Endothelial cell of umbilical vein (primary cell): ENCODE measurements at regions of chr9 and their contacts with region 1.

Region 1: GRCh38 chr9:83219152-83219923 is 156.4 kb upstream of the RASEF start:
- DNase-seq: peak; percentile 84
- H3K4me3 ChIP-seq: peak overlapping the region; percentile 45 to 100 (median 98)
- H3K27ac ChIP-seq: peak overlapping the region; percentile 66
- H3K4me1 ChIP-seq: peaks cover 23% of the 10 kb centered on the region
- H3K27me3 ChIP-seq: no peaks in the 10 kb centered on the region
- CTCF ChIP-seq: peak; percentile 43 to 63
- POLR2A ChIP-seq: peak; percentile 41

Region 2: DNA sequence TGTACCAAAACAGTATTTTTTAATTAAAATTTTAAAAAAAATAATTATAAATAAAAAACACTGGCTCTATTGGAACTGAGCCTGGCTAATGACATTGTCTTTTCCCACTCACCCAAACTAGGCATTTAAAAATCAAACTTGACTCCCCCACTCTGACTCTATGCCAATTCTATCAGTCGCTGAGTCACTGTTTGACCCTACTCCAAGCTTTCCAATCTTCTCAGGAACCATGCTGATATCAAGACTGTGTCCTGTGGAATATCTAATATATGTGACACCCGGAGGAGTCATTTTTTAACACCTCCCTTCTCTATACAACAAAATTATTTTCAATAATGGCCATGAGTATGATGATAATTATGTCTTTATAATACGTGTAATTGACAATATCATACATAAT is 15.2 kb after region 1 on chr9:
- CTCF ChIA-PET with region 1: interaction called, 15 read pairs
- POLR2A ChIA-PET with region 1: no interaction called
- dilution Hi-C with region 1: no loop called
- intact Hi-C with region 1: no loop called
- DNase-seq: peak; percentile 61
- H3K4me3 ChIP-seq: no peak overlapping the region
- H3K27ac ChIP-seq: no peak overlapping the region
- H3K4me1 ChIP-seq: peaks cover 10% of the 10 kb centered on the region
- H3K27me3 ChIP-seq: no peaks in the 10 kb centered on the region
- CTCF ChIP-seq: no peak
- POLR2A ChIP-seq: no peak

Region 3: DNA sequence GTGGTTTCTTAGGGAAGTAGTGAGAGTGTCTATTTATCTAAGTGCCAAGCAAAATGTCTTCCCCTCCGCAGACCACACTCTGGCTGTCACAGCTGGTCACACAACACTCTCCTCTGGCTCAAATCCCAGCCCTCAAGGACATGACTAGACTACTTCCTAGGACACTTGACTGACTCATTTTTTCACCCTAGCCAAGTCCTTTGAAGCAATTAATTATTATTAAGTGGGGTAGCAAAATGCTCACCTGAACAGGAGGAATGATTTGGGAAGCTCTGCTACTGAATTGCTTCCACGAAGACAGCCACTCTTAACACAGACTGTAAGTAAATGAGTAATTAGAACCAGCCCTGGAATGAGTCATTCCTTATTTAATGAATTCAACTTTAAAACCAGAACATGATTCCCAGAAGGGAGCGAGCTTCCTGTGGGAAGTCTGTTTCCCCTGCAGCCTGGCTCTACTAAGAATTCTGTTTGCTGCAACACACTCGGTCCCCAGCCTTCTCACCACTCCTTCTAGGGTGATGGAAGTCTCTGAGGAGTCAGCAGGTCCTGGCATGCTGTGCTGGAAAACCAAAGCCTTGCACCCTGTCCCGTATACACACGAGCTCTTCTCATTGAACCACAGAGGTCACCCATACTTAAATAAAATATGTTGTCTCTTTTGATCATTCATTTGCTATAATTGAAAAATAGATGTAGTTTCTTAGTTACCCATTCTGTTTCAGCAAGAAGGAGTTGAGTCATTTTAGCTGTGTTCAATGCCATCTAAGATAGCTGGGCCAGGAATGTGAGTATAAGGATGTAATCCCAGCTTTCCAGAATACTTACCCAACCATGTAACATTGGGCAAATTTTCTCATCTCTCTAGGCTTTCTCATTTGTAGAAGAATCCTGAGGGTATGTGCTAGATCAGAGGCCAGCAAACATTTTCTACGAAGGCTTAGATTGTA is 62.2 kb after region 1 on chr9:
- CTCF ChIA-PET with region 1: interaction called, 27 read pairs
- POLR2A ChIA-PET with region 1: no interaction called
- dilution Hi-C with region 1: no loop called
- intact Hi-C with region 1: loop called (anchors 2 kb)
- DNase-seq: peak; percentile 82
- H3K4me3 ChIP-seq: peak overlapping the region in 1 of 3 experiments; percentile 14
- H3K27ac ChIP-seq: peak overlapping the region; percentile 77
- H3K4me1 ChIP-seq: peaks cover 25% of the 10 kb centered on the region
- H3K27me3 ChIP-seq: no peaks in the 10 kb centered on the region
- CTCF ChIP-seq: no peak
- POLR2A ChIP-seq: no peak

Region 4: DNA sequence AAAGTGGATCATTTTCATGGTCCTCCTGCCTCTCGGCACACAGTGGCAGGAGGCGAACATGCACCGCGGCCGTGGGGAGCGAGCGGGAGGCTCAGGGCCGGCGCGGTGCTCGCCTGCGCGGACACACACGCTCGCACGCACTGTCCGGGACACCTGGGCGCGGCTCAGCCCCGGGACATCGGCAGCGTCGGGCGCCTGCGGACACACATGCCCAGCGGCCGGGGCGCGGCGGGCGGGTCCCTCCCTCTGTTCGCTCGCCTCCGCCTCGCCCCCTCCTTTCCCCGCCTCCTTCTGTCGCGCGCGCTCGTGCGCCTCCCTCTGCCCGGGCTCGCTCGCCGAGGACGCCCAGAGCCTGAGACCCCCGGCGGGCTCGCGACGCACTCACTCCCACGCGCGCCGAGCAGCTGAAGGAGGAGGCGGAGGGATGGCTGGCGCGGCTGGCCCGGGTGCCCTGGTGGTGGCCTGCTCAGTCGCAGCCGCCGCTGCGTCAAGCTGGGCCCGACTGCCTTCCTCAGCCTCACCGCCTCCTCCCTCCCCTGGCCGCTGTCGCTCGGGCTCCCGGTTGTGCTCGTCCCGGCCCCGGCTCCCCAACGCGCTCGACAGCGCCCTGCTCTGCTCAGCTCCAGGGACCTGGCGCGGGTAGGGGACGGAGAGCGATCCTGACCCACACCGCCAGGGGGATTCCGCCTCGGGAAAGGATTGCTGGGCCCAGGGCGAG is 319.0 kb after region 1 on chr9 and contains the start of gene FRMD3:
- CTCF ChIA-PET with region 1: interaction called, 267 read pairs
- POLR2A ChIA-PET with region 1: no interaction called
- dilution Hi-C with region 1: no loop called
- intact Hi-C with region 1: loop called (anchors 1 kb)
- DNase-seq: peak; percentile 66
- H3K4me3 ChIP-seq: peak within 1 kb of the TSS; percentile 29 to 40 (median 36)
- H3K27ac ChIP-seq: no peak within 1 kb of the TSS
- H3K4me1 ChIP-seq: peaks cover 6% of the 10 kb centered on the region
- H3K27me3 ChIP-seq: peaks cover 8 to 19% of the 10 kb centered on the region in 2 experiments
- CTCF ChIP-seq: peak; percentile 61 to 79
- POLR2A ChIP-seq: no peak
- total RNA-seq, gene FRMD3: 6.1 and 7.3 TPM in 2 replicates

Region 5: GRCh38 chr9:83596896-83597504 is 377.7 kb after region 1 on chr9:
- CTCF ChIA-PET with region 1: interaction called, 23 read pairs
- POLR2A ChIA-PET with region 1: no interaction called
- dilution Hi-C with region 1: no loop called
- intact Hi-C with region 1: loop called (anchors 1 kb)
- DNase-seq: peak; percentile 31
- H3K4me3 ChIP-seq: no peak overlapping the region
- H3K27ac ChIP-seq: no peak overlapping the region
- H3K4me1 ChIP-seq: no peaks in the 10 kb centered on the region
- H3K27me3 ChIP-seq: no peaks in the 10 kb centered on the region
- CTCF ChIP-seq: peak; percentile 70 to 72
- POLR2A ChIP-seq: no peak

Region 6: DNA sequence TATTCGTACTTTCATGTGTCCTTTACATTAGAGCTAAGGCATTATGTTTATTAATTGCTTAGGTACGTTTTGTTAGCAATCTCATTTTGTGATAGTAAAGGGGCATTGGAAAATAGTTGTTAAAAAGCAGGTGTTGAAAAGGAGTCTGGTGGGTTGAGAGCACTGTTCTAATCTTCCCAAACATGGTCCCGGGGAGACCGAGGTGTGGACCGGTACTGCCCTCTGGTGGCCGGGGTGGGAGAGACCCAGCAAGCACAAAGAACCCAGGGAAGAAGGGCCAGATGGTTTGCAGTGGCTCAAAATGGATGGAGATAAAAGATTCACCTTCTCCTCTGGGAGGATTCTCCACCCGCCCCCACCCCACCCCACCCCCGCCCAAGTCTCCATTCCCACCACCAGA is 429.7 kb after region 1 on chr9:
- CTCF ChIA-PET with region 1: interaction called, 4 read pairs
- POLR2A ChIA-PET with region 1: no interaction called
- dilution Hi-C with region 1: no loop called
- intact Hi-C with region 1: loop called (anchors 1 kb)
- DNase-seq: peak; percentile 32
- H3K4me3 ChIP-seq: no peak overlapping the region
- H3K27ac ChIP-seq: no peak overlapping the region
- H3K4me1 ChIP-seq: no peaks in the 10 kb centered on the region
- H3K27me3 ChIP-seq: no peaks in the 10 kb centered on the region
- CTCF ChIP-seq: peak; percentile 70 to 77
- POLR2A ChIP-seq: no peak

Region 7: GRCh38 chr9:83920927-83921707 is 701.8 kb after region 1 on chr9 and contains the start of gene KIF27:
- CTCF ChIA-PET with region 1: no interaction called
- POLR2A ChIA-PET with region 1: no interaction called
- dilution Hi-C with region 1: no loop called
- intact Hi-C with region 1: loop called (anchors 10 kb)
- DNase-seq: peak; percentile 98
- H3K4me3 ChIP-seq: peak within 1 kb of the TSS; percentile 41 to 78 (median 69)
- H3K27ac ChIP-seq: peak within 1 kb of the TSS; percentile 69
- H3K4me1 ChIP-seq: peaks cover 10% of the 10 kb centered on the region
- H3K27me3 ChIP-seq: no peaks in the 10 kb centered on the region
- CTCF ChIP-seq: peak; percentile 8 to 36
- POLR2A ChIP-seq: peak; percentile 93
- total RNA-seq, gene KIF27: 3.2 and 3.5 TPM in 2 replicates